ENCODE measurements at regions of chr4 and their contacts with region 1.

Region 1: DNA sequence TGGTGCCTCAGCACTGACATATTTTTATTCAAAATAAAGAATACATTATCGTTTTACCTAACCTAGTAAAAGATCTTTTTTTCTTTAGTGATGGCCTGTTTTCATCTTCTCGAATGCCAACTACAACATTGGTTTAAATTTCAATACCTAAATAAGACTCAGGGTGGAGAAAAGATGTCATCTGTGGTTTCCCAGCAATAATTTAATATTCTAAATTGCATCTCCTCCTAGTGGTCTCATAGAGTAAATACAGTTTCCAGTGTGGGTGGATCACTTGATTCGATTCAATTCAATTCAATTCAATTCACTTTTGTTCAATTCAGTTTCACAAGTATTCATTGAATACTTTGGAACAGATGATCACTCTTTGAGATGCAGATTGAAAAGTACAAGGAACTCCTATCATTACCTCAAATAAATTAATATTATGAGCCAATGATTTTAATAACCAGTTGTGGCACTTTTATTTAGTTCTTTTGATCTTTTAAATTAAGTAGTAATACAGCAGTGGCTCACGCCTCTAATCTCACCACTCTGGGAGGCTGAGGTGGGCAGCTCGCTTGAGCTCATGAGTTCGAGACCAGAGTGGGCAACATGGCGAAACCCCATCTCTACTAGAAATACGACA is 427.2 kb downstream of the FAT4 start:
- DNase-seq: no peak
- H3K4me3 ChIP-seq: no peak overlapping the region
- H3K27ac ChIP-seq: no peak overlapping the region
- H3K4me1 ChIP-seq: peaks cover 0 to 7% (median 0%) of the 10 kb centered on the region in 4 donors
- H3K27me3 ChIP-seq: no peaks in the 10 kb centered on the region
- CTCF ChIP-seq: peak in 5 of 7 experiments; percentile 39 to 66 (median 50)
- EP300 ChIP-seq: no peak
- POLR2A ChIP-seq: no peak

Region 2: DNA sequence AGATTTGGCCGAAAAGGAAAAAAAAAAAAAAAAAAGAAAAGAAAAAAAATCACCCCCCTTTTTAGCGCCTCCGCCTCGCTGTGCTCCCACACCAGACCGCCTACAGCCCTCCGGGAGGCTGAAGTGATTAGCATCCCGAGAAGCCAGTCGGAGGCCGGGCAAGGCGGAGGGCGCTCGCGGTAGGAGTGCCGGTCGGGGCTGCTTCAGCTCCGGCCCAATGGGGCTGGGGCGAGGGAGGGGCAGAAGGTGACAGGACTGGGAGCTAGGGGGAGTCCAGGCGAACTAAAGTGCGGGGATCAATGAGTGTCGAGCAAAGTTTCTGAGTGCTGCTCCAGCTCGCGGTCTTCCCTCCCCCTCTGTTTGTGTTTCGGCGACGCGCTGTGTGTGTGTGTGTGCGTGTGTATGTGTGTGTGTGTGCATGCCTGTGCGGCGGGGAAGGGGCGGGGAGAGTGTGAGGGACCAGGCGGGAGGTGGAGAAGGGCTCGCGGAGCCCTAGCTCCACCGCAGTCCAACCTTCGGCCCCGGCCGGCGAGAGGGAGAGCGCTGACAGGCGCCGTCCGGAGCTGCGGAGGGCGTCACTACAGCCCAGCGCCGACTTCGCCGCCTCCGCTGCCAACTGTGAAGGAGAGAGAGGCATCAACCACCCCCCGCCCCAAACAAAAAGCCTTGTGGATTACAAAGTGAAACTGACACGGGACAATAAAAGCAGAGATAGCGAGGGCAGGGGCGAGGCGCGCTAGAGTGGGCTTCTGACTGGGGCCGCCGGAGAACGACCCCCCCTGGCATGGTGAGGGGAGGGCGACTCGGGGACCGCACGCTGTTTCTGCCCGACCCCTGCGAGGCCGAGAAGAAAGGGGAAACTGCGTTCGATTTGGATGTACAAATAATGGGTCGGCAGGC is 427.0 kb before region 1 on chr4 and contains the start of gene FAT4:
- intact Hi-C with region 1: loop called (anchors 5 kb)
- DNase-seq: peak; percentile 86 to 98
- H3K4me3 ChIP-seq: peak within 1 kb of the TSS; percentile 73 to 80 (median 79)
- H3K27ac ChIP-seq: peak within 1 kb of the TSS; percentile 75 to 93 (median 85)
- H3K4me1 ChIP-seq: peaks cover 14 to 50% (median 46%) of the 10 kb centered on the region in 4 donors
- H3K27me3 ChIP-seq: peaks cover 0 to 41% (median 19%) of the 10 kb centered on the region in 3 donors
- CTCF ChIP-seq: peak in 1 of 7 experiments; percentile 41
- EP300 ChIP-seq: no peak
- POLR2A ChIP-seq: peak in 1 of 4 donors; percentile 24
- total RNA-seq, gene FAT4: 6.7 to 76.7 (median 8.4) TPM